ENCODE measurements at regions of chr19 and their contacts with region 1.

Region 1: DNA sequence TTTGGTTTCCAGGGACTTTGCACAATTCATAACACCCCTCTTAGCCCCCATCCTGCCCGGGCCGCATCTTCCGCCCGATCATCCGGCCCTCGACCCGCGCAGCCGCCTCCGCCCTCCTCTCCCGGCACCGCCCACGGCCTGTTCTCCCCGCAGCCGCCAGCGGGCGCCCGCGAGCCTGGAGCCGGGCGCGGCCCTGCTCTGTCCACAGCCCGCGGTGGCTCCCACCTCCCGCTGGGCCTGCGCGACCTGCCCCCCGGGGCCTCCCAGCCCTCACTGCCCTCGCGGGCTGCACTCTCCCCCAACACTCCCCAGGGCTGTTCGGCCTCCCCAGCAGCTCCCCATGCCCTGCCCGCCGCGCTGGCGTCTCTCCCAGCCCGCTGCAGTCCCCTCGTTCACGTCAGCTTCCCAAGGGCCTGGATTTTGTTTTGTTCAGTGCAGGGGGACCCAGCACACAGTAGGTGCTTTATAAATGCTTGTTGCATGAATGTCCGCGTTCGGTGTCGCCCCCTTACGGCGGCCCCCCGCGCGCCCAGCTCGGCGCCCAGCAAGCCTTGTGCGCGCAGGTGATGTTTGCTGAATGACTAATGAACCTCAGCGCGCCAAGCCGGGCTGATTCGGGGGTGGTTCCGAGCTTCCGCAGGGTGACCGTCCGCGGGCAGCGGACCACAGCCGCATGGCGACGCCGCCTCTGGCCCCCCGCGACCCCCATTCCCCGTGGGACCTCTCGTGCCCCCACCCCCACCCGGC is 4.6 kb upstream of the APC2 start:
- DNase-seq: peak; percentile 57 to 89 (median 78)
- ATAC-seq: peak; percentile 89
- H3K4me3 ChIP-seq: peak overlapping the region; percentile 48 to 54
- H3K4me3 Mint-ChIP-seq: peak overlapping the region; percentile 65
- H3K27ac ChIP-seq: peak overlapping the region in 1 of 2 experiments; percentile 48
- H3K27ac Mint-ChIP-seq: no peak overlapping the region
- H3K4me1 ChIP-seq: peaks cover 25% of the 10 kb centered on the region
- H3K4me1 Mint-ChIP-seq: peaks cover 23% of the 10 kb centered on the region
- H3K27me3 ChIP-seq: peaks cover 29 to 33% of the 10 kb centered on the region in 2 experiments
- H3K27me3 Mint-ChIP-seq: peaks cover 24% of the 10 kb centered on the region
- CTCF ChIP-seq: peak; percentile 93

Region 2: GRCh38 chr19:1455336-1456120 is 10.2 kb after region 1 on chr19:
- CTCF ChIA-PET with region 1: interaction called, 17 read pairs
- POLR2A ChIA-PET with region 1: interaction called, 8 read pairs
- intact Hi-C with region 1: no loop called
- DNase-seq: peak in 5 of 9 experiments; percentile 39 to 77 (median 69)
- ATAC-seq: peak; percentile 81
- H3K4me3 ChIP-seq: no peak overlapping the region
- H3K4me3 Mint-ChIP-seq: peak overlapping the region; percentile 11
- H3K27ac ChIP-seq: no peak overlapping the region
- H3K27ac Mint-ChIP-seq: no peak overlapping the region
- H3K4me1 ChIP-seq: peaks cover 21% of the 10 kb centered on the region
- H3K4me1 Mint-ChIP-seq: peaks cover 21% of the 10 kb centered on the region
- H3K27me3 ChIP-seq: peaks cover 47 to 50% of the 10 kb centered on the region in 2 experiments
- H3K27me3 Mint-ChIP-seq: peaks cover 33% of the 10 kb centered on the region
- CTCF ChIP-seq: no peak

Region 3: DNA sequence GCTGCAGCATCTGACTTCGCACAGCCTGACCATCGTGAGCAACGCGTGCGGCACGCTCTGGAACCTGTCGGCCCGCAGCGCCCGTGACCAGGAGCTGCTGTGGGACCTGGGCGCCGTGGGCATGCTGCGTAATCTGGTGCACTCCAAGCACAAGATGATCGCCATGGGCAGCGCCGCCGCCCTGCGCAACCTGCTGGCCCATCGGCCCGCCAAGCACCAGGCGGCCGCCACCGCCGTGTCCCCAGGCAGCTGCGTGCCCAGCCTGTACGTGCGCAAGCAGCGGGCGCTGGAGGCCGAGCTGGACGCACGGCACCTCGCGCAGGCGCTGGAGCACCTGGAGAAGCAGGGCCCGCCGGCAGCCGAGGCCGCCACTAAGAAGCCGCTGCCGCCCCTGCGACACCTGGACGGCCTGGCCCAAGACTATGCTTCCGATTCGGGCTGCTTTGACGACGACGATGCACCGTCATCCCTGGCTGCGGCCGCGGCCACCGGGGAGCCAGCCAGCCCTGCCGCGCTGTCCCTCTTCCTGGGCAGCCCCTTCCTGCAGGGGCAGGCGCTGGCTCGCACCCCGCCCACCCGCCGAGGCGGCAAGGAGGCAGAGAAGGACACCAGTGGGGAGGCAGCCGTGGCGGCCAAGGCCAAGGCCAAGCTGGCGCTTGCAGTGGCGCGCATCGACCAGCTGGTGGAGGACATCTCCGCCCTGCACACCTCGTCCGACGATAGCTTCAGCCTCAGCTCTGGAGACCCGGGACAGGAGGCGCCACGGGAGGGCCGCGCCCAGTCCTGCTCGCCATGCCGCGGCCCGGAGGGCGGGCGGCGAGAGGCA is 20.0 kb after region 1 on chr19:
- CTCF ChIA-PET with region 1: interaction called, 11 read pairs
- POLR2A ChIA-PET with region 1: interaction called, 4 read pairs
- intact Hi-C with region 1: no loop called
- DNase-seq: peak in 4 of 9 experiments; percentile 26 to 59 (median 44)
- ATAC-seq: no peak
- H3K4me3 ChIP-seq: no peak overlapping the region
- H3K4me3 Mint-ChIP-seq: no peak overlapping the region
- H3K27ac ChIP-seq: no peak overlapping the region
- H3K27ac Mint-ChIP-seq: no peak overlapping the region
- H3K4me1 ChIP-seq: peaks cover 37% of the 10 kb centered on the region
- H3K4me1 Mint-ChIP-seq: peaks cover 3% of the 10 kb centered on the region
- H3K27me3 ChIP-seq: peaks cover 8 to 21% of the 10 kb centered on the region in 2 experiments
- H3K27me3 Mint-ChIP-seq: no peaks in the 10 kb centered on the region
- CTCF ChIP-seq: no peak

Region 4: DNA sequence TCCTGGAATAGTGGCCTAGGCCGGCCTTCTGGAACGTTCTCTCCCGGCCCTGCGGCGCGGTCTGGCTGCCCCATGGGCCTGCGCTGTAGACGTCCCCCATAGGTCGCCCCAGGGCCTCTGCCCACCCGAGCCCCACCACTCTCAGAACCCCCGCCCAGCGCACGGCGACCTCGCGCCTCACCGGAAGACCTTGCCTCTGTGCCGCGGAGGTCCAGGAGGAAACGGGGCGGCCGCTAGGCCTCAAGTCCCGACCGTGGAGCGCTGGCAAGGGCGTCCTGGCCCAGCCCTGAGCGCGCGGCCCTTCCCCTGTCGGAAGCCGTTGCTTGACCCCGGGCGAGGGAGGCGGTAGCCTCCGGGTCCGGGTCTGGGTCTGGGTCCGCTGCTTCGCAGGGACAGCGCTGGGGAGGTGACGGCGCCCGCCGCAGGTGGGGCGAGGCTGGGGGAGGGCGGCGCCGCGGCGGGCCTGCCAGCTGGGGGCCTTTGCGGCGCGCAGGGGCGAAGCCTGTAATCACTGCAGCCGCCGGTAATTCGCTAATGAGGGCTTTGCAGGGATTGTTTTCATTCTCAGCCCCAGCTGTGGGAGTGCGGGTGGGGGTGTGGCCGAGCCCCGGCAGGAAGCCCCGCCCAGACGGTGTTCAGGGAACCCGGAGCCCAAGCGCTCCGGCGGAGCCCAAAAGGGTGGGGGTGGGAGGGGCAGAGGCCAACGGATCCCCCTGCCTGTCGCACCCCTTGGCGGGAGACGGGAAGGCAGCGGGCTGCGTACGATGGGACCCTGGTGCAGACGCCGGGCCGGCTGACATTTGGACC is 25.0 kb after region 1 on chr19:
- CTCF ChIA-PET with region 1: interaction called, 11 read pairs
- POLR2A ChIA-PET with region 1: interaction called, 5 read pairs
- intact Hi-C with region 1: no loop called
- DNase-seq: peak; percentile 38 to 83 (median 71)
- ATAC-seq: peak; percentile 76
- H3K4me3 ChIP-seq: peak overlapping the region; percentile 51 to 58
- H3K4me3 Mint-ChIP-seq: peak overlapping the region; percentile 74
- H3K27ac ChIP-seq: no peak overlapping the region
- H3K27ac Mint-ChIP-seq: no peak overlapping the region
- H3K4me1 ChIP-seq: peaks cover 54% of the 10 kb centered on the region
- H3K4me1 Mint-ChIP-seq: peaks cover 14% of the 10 kb centered on the region
- H3K27me3 ChIP-seq: peaks cover 21 to 22% of the 10 kb centered on the region in 2 experiments
- H3K27me3 Mint-ChIP-seq: peaks cover 2% of the 10 kb centered on the region
- CTCF ChIP-seq: no peak

Region 5: GRCh38 chr19:1478934-1479707 is 33.8 kb after region 1 on chr19 and contains the start of gene C19orf25:
- CTCF ChIA-PET with region 1: no interaction called
- POLR2A ChIA-PET with region 1: no interaction called
- intact Hi-C with region 1: loop called in 1 of 2 experiments (anchors 2 kb)
- DNase-seq: peak; percentile 81 to 94 (median 89)
- ATAC-seq: peak; percentile 91
- H3K4me3 ChIP-seq: peak within 1 kb of the TSS; percentile 68 to 86
- H3K4me3 Mint-ChIP-seq: peak within 1 kb of the TSS; percentile 99
- H3K27ac ChIP-seq: peak within 1 kb of the TSS; percentile 65 to 76
- H3K27ac Mint-ChIP-seq: peak within 1 kb of the TSS; percentile 98
- H3K4me1 ChIP-seq: peaks cover 12% of the 10 kb centered on the region
- H3K4me1 Mint-ChIP-seq: peaks cover 19% of the 10 kb centered on the region
- H3K27me3 ChIP-seq: no peaks in the 10 kb centered on the region
- H3K27me3 Mint-ChIP-seq: no peaks in the 10 kb centered on the region
- CTCF ChIP-seq: no peak
- total RNA-seq, gene C19orf25: 11.9 to 12.1 TPM

Region 6: DNA sequence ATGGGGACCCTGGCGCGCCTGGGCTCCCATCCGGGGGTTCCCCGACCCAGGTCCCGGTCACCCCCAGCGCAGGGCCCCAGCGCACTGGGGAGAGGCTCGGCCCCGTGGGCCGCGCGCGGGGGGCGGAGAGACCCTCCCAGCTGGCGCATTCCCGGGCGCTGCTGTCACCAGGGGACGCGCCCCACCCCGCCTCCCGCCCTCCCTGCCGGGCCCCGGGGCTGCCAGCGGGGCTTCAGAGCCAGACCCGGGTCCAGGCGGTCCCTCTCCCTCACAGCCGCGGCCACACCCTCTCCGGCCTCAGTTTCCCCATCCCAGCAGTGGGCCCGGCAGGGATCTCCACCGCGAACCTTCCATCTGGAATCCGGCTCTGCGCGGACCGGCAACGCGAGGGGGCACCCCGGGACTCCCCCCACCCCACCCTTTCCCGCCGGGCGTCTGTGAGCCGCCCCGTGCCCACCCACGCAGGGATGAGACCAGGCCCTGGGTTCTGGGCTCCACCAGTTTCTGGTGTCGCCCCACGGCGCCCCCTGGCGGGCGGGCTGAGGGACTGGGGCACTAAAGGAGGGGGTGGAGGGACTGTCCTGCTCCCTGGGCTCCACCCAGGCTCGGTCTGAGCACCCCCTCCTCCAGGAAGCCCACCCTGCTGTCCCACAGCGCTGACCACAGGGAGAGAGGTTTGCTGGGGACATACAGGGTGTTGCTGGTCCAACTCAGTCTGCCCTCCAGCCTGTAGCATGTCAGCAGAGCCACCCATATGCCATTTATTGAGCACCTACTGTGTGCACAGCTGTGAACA is 68.3 kb after region 1 on chr19:
- CTCF ChIA-PET with region 1: interaction called, 4 read pairs
- POLR2A ChIA-PET with region 1: no interaction called
- intact Hi-C with region 1: loop called (anchors 1 to 2 kb)
- DNase-seq: peak in 8 of 9 experiments; percentile 45 to 79 (median 76)
- ATAC-seq: peak; percentile 67
- H3K4me3 ChIP-seq: no peak overlapping the region
- H3K4me3 Mint-ChIP-seq: no peak overlapping the region
- H3K27ac ChIP-seq: no peak overlapping the region
- H3K27ac Mint-ChIP-seq: no peak overlapping the region
- H3K4me1 ChIP-seq: peaks cover 12% of the 10 kb centered on the region
- H3K4me1 Mint-ChIP-seq: peaks cover 11% of the 10 kb centered on the region
- H3K27me3 ChIP-seq: peaks cover 5 to 12% of the 10 kb centered on the region in 2 experiments
- H3K27me3 Mint-ChIP-seq: peaks cover 10% of the 10 kb centered on the region
- CTCF ChIP-seq: peak; percentile 66

Region 7: DNA sequence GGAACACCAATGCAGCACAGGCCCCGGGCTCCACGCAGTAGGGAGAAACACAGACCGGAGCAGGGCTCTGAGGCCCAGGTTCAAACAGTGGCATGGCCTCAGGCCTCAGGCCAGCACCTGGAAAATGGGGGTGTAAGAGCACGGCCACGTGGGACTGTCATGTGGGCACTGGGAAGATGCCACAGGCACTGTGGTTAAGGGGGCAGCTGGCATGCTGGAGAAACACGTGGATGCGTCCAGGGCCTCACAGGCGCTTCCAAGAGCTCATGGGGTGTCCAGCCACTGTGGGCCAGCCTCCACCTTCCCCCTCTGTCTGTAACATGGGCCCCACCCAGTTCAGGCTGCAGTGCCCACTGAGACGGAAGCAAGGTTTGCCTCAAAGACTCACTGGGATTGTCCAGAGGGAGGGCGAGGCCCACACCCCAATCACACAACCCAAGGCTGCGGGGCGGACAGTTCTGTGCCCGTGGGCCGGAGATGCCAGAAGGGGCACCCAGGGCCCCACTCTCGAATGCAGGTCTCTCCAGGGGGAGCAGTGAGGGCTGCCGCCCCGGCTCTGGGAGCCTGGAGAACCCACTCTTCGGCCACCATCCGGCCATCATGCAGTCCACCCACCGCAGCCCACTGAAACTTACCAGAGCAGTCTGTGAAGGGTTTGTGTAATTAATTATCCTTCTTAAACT is 153.6 kb after region 1 on chr19:
- CTCF ChIA-PET with region 1: no interaction called
- POLR2A ChIA-PET with region 1: no interaction called
- intact Hi-C with region 1: no loop called
- DNase-seq: no peak
- ATAC-seq: no peak
- H3K4me3 ChIP-seq: no peak overlapping the region
- H3K4me3 Mint-ChIP-seq: no peak overlapping the region
- H3K27ac ChIP-seq: no peak overlapping the region
- H3K27ac Mint-ChIP-seq: no peak overlapping the region
- H3K4me1 ChIP-seq: peaks cover 12% of the 10 kb centered on the region
- H3K4me1 Mint-ChIP-seq: peaks cover 15% of the 10 kb centered on the region
- H3K27me3 ChIP-seq: no peaks in the 10 kb centered on the region
- H3K27me3 Mint-ChIP-seq: no peaks in the 10 kb centered on the region
- CTCF ChIP-seq: no peak